OCI-LY7 (cell line): ENCODE measurements at regions of chr2 and their contacts with region 1.

Region 1: GRCh38 chr2:224284134-224284946 is 117.6 kb downstream of the FAM124B start:
- DNase-seq: peak; percentile 47
- H3K4me3 ChIP-seq: no peak overlapping the region
- H3K27ac ChIP-seq: no peak overlapping the region
- H3K4me1 ChIP-seq: no peaks in the 10 kb centered on the region
- CTCF ChIP-seq: peak; percentile 87

Region 2: GRCh38 chr2:223674998-223675609 is 609.2 kb before region 1 on chr2:
- CTCF ChIA-PET with region 1: no interaction called
- POLR2A ChIA-PET with region 1: no interaction called
- intact Hi-C with region 1: loop called (anchors 10 kb)
- DNase-seq: peak; percentile 15
- H3K4me3 ChIP-seq: no peak overlapping the region
- H3K27ac ChIP-seq: no peak overlapping the region
- H3K4me1 ChIP-seq: no peaks in the 10 kb centered on the region
- CTCF ChIP-seq: peak; percentile 67

Region 3: GRCh38 chr2:223970343-223971128 is 313.8 kb before region 1 on chr2:
- CTCF ChIA-PET with region 1: interaction called, 4 read pairs
- POLR2A ChIA-PET with region 1: interaction called, 8 read pairs
- intact Hi-C with region 1: loop called (anchors 1 kb)
- DNase-seq: peak; percentile 69
- H3K4me3 ChIP-seq: no peak overlapping the region
- H3K27ac ChIP-seq: no peak overlapping the region
- H3K4me1 ChIP-seq: no peaks in the 10 kb centered on the region
- CTCF ChIP-seq: peak; percentile 99

Region 4: GRCh38 chr2:223993621-223994232 is 290.6 kb before region 1 on chr2:
- CTCF ChIA-PET with region 1: interaction called, 5 read pairs
- POLR2A ChIA-PET with region 1: interaction called, 7 read pairs
- intact Hi-C with region 1: loop called (anchors 1 kb)
- DNase-seq: peak; percentile 74
- H3K4me3 ChIP-seq: no peak overlapping the region
- H3K27ac ChIP-seq: no peak overlapping the region
- H3K4me1 ChIP-seq: no peaks in the 10 kb centered on the region
- CTCF ChIP-seq: peak; percentile 93

Region 5: DNA sequence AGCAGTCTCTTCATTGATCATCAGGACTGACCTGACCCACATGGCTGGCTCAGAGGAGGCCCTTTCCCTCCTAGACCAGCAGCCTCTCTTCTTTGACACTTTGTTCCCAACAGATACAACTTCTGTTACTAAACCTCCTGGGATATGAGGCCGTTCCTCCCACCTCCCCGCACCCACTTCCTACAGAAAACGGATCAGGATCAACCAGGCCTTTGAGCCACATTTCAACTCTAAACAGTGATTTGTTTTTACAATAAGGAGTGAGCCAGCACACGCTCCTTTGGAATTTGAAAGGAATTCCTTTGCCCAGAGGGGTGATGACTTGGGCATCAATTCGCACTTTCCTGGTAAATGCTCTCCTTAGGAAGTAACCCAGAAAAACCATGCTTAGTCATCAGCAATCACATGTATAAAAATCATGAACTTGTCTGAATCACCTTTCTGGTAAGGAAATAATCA is 62.9 kb before region 1 on chr2:
- CTCF ChIA-PET with region 1: no interaction called
- POLR2A ChIA-PET with region 1: no interaction called
- intact Hi-C with region 1: no loop called
- DNase-seq: no peak
- H3K4me3 ChIP-seq: no peak overlapping the region
- H3K27ac ChIP-seq: no peak overlapping the region
- H3K4me1 ChIP-seq: no peaks in the 10 kb centered on the region
- CTCF ChIP-seq: no peak